A549 (cell line): ENCODE measurements at regions of chr19 and their contacts with region 1.

Region 1: GRCh38 chr19:14337510-14337909 is 43.7 kb upstream of the ADGRE5 start:
- DNase-seq: peak; percentile 34 to 75
- ATAC-seq: peak; percentile 54 to 64; a peak in 5 of 6 replicates
- H3K4me3 ChIP-seq: no peak overlapping the region
- H3K27ac ChIP-seq: no peak overlapping the region
- H3K4me1 ChIP-seq: no peaks in the 10 kb centered on the region
- CTCF ChIP-seq: no peak
- EP300 ChIP-seq: no peak
- POLR2A ChIP-seq: no peak
- RAD21 ChIP-seq: no peak

Region 2: DNA sequence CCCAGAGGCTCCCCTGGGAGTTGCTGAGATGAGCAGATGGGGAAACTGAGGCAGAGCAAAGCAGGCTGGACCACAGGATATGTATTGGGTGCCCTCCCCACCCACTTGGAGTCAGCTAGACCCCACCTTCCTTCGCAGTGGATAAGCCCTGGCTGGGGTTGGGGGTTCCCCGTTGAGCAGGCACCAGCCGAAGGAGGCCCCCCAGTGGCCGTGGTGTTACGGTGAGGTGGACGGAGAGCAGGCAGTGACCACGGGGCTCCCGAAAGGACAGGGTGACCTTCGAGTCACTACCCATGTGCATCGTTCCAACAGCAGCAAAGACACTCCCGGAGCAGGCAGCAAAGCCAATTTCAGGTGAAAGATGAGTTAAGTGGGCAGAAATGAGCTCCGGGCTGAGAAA is 18.6 kb before region 1 on chr19:
- CTCF ChIA-PET with region 1: no interaction called
- POLR2A ChIA-PET with region 1: no interaction called
- DNase-seq: no peak
- ATAC-seq: peak; percentile 43 to 56; a peak in 4 of 6 replicates
- H3K4me3 ChIP-seq: no peak overlapping the region
- H3K27ac ChIP-seq: no peak overlapping the region
- H3K4me1 ChIP-seq: no peaks in the 10 kb centered on the region
- CTCF ChIP-seq: no peak
- EP300 ChIP-seq: no peak
- POLR2A ChIP-seq: no peak
- RAD21 ChIP-seq: no peak

Region 3: GRCh38 chr19:14381689-14382474 is 44.4 kb after region 1 on chr19:
- CTCF ChIA-PET with region 1: no interaction called
- POLR2A ChIA-PET with region 1: interaction called, 11 read pairs
- DNase-seq: peak in 1 of 2 experiments; percentile 77
- ATAC-seq: peak; percentile 68 to 74
- H3K4me3 ChIP-seq: peak overlapping the region; percentile 84
- H3K27ac ChIP-seq: peak overlapping the region; percentile 94
- H3K4me1 ChIP-seq: peaks cover 34% of the 10 kb centered on the region
- CTCF ChIP-seq: no peak
- EP300 ChIP-seq: no peak
- POLR2A ChIP-seq: no peak
- RAD21 ChIP-seq: no peak